OCI-LY7 (cell line): ENCODE measurements at regions of chr10 and their contacts with region 1.

Region 1: DNA sequence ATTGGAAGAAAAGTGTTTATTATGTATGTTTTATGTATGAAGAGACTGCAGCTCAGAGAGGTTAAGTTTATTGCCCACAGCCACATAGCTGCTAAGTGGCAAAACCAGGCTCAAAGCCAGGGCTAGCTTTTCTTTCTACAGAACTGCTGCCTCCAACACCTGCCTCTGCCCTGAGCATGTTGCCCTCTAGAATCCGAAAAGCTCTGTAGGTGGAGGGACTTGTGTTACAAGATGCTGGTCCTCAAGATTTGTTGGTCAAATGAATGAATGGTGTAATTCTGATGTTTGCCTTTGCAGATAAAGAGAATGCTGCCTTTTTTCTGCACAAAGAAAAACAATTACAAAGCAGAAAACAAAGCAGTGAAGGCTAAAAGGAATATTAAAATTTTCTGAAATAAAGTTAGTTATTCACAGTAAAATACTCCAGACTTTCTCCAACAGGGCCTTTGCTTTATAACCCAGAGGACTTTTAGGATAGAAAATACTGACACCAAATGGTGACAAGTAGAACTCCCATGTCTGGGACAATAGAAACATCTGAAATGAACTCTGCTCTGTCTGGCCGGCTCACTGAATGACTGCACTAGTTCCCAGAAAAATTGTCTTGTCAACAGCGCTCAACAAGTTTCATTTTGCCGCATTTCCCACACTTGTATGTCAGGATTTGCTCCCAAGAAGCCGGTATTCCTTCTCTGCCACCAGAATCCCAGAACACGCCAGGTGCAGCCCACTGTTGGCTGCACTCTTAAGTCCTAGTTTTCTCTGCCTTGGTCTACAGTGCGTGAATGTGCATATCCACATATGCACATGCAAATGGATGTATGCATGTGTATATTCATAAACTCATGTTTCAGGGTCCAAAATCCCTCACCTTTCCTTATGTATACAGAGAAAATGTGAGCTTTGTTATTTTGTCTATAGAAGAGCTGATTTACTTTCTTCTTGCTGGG is 11.0 kb upstream of the DNTT start:
- DNase-seq: peak; percentile 87
- H3K4me3 ChIP-seq: peak overlapping the region; percentile 13
- H3K27ac ChIP-seq: peak overlapping the region; percentile 98
- H3K4me1 ChIP-seq: peaks cover 98% of the 10 kb centered on the region
- CTCF ChIP-seq: peak; percentile 96

Region 2: GRCh38 chr10:96043033-96043932 is 250.0 kb before region 1 on chr10 and contains the start of gene CCNJ:
- CTCF ChIA-PET with region 1: interaction called, 4 read pairs
- POLR2A ChIA-PET with region 1: interaction called, 6 read pairs
- intact Hi-C with region 1: loop called (anchors 5 kb)
- DNase-seq: peak; percentile 91
- H3K4me3 ChIP-seq: peak within 1 kb of the TSS; percentile 89
- H3K27ac ChIP-seq: peak within 1 kb of the TSS; percentile 50
- H3K4me1 ChIP-seq: peaks cover 23% of the 10 kb centered on the region
- CTCF ChIP-seq: 0 out of 2 replicates have a peak, but pooled peaks have one; percentile 17
- total RNA-seq, gene CCNJ: 5.6 and 8.2 TPM in 2 replicates

Region 3: DNA sequence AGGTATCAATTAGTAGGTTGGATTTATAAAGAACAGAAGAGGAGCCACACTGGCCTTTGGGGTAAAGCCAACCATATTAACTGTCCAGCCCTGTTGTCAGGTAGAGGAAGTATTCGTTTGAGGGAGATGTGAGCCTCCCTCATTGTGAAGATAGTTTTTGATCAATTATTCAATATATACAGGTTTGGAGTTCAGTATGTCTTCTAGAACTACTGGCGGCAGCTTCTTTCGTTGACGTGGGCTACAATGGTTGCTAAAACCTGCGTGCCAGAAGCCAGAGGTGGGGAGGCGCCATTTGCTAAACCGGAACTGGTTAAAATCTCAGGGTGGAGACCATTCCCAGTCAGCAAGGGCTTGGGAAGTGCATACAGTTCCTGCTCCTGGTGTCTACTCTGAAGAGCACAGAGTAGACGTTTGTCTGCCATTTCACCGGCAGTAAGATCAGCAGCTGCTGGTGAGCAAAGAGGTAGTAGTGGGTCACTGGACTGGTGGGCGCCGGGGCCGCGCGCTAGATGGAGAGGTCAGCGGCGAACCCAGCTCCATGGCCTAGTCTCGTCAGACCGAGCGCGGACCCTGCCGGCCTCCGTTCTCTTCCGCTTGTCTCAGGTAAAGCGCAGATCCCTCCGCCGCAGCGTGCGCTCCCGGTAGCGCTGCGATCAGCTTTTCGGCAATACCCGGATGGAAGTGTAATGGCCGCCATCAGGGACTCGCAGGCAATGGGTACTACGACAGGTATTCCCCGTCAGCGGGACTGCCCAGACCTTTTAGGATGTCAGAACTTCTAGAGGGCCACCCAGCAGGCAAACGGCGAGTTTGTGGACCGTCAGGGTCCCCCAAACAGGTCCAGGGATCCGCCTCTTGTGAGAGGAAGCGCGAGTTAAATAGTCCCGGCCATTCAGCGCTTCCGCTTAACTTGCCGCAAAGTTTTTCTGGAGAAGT is 163.6 kb before region 1 on chr10 and contains the start of gene ZNF518A:
- CTCF ChIA-PET with region 1: no interaction called
- POLR2A ChIA-PET with region 1: interaction called, 12 read pairs
- intact Hi-C with region 1: loop called (anchors 5 kb)
- DNase-seq: peak; percentile 99
- H3K4me3 ChIP-seq: peak within 1 kb of the TSS; percentile 73
- H3K27ac ChIP-seq: peak within 1 kb of the TSS; percentile 92
- H3K4me1 ChIP-seq: peaks cover 34% of the 10 kb centered on the region
- CTCF ChIP-seq: no peak
- total RNA-seq, gene ZNF518A: 19.0 and 19.4 TPM in 2 replicates

Region 4: GRCh38 chr10:96244354-96244753 is 48.9 kb before region 1 on chr10:
- CTCF ChIA-PET with region 1: interaction called, 5 read pairs
- POLR2A ChIA-PET with region 1: interaction called, 12 read pairs
- intact Hi-C with region 1: loop called (anchors 1 kb)
- DNase-seq: peak; percentile 97
- H3K4me3 ChIP-seq: peak overlapping the region; percentile 52
- H3K27ac ChIP-seq: peak overlapping the region; percentile 93
- H3K4me1 ChIP-seq: peaks cover 50% of the 10 kb centered on the region
- CTCF ChIP-seq: no peak

Region 5: DNA sequence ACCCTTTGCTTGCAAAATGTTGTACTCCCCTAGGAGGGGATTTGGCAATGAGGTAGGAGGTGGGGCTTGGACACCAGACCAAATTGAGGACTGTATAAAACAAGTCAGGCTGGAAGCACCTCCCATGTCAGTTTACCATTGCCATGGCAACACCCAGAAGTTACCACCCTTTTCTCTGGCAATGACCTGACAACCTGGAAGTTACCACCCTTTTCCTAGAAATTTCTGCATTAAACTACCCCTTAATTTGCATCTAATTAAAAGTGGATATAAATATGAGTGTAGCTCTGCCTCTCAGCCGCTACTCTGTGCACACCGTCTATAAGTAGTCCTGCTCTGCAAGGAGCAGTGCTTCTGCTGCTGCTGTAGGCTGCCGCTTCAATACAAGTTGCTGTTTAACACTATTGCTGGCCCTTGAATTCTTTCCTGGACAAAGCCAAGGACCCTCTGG is 14.0 kb before region 1 on chr10:
- CTCF ChIA-PET with region 1: no interaction called
- POLR2A ChIA-PET with region 1: interaction called, 176 read pairs
- intact Hi-C with region 1: no loop called
- DNase-seq: peak; percentile 69
- H3K4me3 ChIP-seq: peak overlapping the region; percentile 9
- H3K27ac ChIP-seq: peak overlapping the region; percentile 53
- H3K4me1 ChIP-seq: peaks cover 84% of the 10 kb centered on the region
- CTCF ChIP-seq: no peak

Region 6: GRCh38 chr10:96339957-96340904 is 47.0 kb after region 1 on chr10:
- CTCF ChIA-PET with region 1: interaction called, 6 read pairs
- POLR2A ChIA-PET with region 1: interaction called, 4 read pairs
- intact Hi-C with region 1: loop called (anchors 1 kb)
- DNase-seq: peak; percentile 88
- H3K4me3 ChIP-seq: no peak overlapping the region
- H3K27ac ChIP-seq: no peak overlapping the region
- H3K4me1 ChIP-seq: peaks cover 13% of the 10 kb centered on the region
- CTCF ChIP-seq: peak; percentile 99